Aorta (tissue), 5 donors: ENCODE measurements at regions of chr1 and their contacts with region 1.

Region 1: DNA sequence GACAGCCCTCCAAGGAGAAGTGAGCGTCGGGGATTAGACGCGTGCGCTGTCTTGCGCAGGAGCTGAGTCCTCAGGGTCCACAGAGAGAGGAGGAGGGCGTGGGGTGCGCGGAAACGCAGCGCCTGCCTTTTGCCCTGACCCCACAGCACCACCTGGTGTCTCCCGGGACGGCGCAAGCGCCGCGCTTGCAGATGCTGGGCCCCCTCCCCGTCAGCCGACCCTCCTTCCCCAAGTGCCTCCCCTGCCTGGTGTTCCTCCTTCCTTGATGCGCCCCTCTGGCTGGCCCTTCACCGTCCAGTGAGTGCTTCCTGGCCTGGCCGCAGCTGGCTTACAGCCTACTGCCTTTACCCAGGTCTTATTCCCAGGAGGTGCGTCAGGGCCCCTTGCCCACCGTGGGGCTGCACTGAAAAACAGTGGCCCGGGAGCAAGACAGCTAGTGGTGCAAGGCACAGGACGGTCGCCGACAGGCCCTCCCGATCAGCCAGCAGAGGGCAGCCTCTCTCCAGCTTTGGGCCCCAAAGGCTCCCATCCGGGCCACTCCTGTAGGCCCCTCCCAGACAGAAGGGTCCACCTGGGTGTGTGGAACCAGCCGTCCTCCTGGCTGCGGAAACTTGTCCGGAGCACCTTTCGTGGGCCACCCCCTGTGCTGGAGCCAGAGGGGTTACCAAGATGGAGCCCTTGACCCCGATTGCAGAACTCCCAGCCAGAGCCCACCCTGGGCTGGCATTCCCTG is 12.9 kb upstream of the PHLDA3 start:
- DNase-seq: peak; percentile 92 to 97
- ATAC-seq: peak; percentile 93
- H3K4me3 ChIP-seq: no peak overlapping the region
- H3K27ac ChIP-seq: peak overlapping the region in 1 of 2 donors; percentile 52
- H3K4me1 ChIP-seq: no peaks in the 10 kb centered on the region
- H3K27me3 ChIP-seq: no peaks in the 10 kb centered on the region

Region 2: DNA sequence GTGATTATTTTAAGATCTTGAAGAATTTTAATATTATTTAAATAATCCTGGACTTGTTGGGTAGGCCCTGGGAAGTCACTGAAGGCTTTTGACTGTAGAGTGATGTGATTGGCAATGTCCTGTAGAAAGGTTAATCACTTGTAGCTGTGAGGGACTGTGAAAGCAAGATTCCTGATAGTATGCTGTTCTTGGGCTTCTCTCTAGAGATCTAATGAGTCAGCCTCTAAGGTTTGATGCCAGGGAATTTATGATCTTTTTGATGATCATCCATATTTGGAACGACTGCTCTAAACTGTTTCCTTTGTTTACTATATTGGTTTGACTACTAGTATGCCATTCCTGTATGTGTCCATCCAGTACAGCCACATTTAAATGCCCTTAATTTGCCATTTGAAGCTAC is 686.8 kb before region 1 on chr1:
- intact Hi-C with region 1: no loop called
- DNase-seq: no peak
- ATAC-seq: no peak
- H3K4me3 ChIP-seq: no peak overlapping the region
- H3K27ac ChIP-seq: no peak overlapping the region
- H3K4me1 ChIP-seq: peaks cover 4% of the 10 kb centered on the region in 2 donors
- H3K27me3 ChIP-seq: no peaks in the 10 kb centered on the region

Region 3: DNA sequence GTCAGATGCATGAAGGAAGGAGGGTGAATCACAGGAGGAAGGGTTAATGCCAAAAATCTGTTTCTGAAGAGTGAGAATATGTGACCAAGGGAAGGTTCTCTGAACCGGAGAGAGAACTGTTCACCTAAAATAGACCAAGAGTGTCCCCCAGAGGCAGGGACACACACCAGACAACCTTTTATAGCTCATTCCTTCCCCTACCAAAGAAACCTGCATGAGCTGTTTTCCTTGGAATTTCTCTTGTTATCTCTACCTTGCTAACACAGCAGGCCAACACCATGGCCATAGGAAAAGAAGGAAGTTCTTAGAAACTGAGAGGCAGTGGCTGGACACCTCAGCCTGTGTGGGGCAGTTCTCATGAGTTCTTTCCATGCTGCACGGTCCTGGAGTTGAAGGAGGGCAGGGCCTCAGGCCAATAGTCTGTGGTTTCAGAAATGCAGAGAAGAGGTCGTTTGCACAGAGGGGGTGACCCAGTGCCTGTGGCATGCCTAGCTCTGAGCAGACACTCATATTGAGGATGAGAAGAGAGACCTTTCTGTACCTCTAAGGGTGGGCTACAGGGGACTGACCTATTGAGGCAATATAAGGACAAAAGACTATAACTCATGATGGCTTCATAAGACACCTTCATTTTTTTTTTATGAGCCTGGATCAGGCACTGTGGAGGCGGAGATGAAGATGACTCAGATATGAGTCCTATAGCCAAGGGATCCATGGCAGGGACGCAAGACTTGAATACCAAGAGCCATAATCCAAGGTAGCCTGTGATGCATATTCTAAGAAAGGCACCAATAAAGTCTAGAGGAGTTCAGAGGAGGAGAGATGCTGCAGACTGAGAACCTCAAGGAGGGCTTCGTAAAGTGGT is 251.9 kb before region 1 on chr1:
- intact Hi-C with region 1: no loop called
- DNase-seq: no peak
- ATAC-seq: no peak
- H3K4me3 ChIP-seq: no peak overlapping the region
- H3K27ac ChIP-seq: no peak overlapping the region
- H3K4me1 ChIP-seq: no peaks in the 10 kb centered on the region
- H3K27me3 ChIP-seq: no peaks in the 10 kb centered on the region

Region 4: DNA sequence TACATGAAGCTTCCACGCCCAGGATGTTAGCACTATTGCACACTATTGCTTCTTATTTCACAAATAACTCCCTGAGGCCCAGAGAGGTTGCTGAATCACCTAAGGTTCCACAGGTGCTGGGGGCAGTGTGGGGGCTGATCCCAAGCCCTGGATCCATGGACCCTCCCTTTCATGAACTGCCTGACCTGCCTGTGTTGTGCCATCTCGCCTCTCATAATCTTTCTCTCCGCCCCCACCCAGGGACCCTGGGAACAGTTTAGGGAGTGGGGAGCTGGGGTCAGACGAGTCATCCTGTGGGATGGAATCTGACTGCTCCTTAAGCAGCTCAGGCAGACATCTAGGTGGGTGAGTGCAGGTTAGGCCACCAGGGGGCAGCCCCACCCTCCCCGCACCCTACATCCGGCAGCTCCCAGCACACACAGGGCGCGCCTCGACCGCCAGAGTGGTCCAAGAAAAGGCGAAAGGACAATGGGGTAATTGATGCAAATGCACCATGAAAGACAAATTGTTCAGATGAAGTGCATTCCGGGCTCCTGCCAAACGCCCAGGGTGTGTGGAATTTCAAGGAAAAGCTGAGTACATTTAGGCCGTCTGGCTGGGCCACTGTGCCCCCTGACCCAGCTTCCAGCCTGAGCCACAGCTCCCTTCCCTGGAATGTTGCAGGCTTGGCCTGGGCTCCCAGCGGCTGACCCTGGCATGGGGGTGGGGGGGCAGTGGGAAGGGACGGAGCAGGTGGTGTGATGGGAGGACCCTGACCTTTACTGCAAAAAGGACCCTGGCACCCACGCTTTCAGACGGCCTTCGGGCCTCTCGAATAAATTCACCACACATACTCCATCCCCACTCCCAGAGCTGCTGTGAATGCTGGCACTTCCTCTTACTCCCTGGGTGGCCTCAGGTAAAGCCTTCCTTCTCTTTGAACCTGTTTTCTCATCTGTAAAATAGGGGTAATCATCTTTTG is 33.7 kb before region 1 on chr1:
- intact Hi-C with region 1: loop called (anchors 2 to 5 kb)
- DNase-seq: peak; percentile 80 to 91
- ATAC-seq: peak; percentile 83
- H3K4me3 ChIP-seq: no peak overlapping the region
- H3K27ac ChIP-seq: no peak overlapping the region
- H3K4me1 ChIP-seq: no peaks in the 10 kb centered on the region
- H3K27me3 ChIP-seq: no peaks in the 10 kb centered on the region